Head of caudate nucleus (tissue), 42 donors: ENCODE measurements at regions of chr3 and their contacts with region 1.

Region 1: DNA sequence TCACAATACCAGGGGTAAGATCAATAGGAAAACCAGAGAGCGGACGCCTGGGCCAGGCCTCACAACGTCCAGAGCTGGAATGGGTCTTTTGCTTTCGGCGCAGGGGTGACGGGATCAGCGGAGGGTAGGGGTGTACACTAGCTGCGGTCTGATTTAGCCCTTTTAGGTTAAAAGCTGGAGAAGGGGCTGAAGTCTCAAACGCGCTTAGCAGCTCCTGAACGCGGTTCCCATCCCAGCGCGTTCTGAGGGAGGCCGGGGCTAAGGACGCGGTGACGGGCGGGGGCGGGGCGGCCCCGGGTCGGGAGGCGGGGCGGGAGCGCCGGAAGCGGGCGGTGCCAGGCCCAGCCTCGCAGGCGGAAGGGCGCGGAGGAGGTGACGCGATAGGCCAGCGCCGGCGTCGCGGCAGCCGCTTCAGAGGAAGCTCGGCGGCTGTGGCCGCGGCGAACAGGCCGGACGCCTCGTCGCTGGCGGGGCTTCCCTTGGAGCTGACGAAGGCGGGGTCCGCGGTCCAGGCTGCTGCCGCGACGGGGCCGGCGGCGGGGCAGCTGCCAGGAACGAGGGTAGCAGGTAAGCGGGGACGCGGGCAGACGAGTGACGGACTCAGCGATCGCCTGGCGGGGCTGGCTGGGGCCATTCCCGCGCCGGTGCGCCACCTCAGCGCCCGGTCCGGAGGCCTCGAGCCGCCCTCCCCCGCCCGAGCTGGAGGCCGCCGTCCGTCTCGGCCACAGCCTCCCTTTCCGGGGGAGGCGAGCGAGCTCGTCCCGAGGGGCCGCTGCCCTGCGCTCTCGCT is at the start of gene SENP5:
- DNase-seq: peak; percentile 75 to 97 (median 93)

Region 2: GRCh38 chr3:196711838-196712513 is 155.7 kb before region 1 on chr3 and contains the starts of genes CEP19 and PIGX:
- intact Hi-C with region 1: loop called (anchors 10 kb)
- DNase-seq: peak; percentile 73 to 96 (median 90)

Region 3: DNA sequence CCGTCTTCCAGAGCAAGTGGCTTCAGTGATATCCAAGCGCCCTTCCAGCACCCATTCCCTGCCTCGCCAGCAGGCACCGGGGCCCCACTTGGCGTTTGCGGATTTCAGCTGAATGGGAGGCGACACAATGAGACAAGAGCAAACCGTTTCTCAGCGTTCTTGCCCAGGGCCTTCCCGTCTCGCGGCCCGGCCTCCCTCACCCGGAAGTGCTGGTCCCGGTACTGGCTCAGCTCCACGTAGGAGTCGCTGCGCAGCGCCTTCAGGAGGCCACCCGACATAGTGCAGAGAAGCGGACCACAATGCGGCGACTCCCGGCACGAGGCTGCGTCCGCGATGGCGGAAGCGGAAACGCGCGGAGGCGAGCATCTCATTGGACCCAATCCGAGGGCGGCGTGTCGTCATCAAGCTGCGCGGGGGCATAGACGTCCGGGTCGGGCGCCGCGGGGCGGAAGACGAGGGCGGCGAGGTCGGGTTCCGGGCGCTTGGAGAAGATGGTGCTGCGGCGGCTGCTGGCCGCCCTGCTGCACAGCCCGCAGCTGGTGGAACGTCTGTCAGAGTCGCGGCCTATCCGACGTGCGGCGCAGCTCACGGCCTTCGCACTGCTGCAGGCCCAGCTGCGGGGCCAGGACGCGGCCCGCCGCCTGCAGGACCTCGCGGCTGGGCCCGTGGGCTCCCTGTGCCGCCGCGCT is 74.7 kb after region 1 on chr3 and contains the start of gene NCBP2:
- intact Hi-C with region 1: loop called (anchors 1 kb)
- DNase-seq: peak; percentile 90 to 99 (median 97)